Calu3 (cell line): ENCODE measurements at regions of chr1 and their contacts with region 1.

Region 1: DNA sequence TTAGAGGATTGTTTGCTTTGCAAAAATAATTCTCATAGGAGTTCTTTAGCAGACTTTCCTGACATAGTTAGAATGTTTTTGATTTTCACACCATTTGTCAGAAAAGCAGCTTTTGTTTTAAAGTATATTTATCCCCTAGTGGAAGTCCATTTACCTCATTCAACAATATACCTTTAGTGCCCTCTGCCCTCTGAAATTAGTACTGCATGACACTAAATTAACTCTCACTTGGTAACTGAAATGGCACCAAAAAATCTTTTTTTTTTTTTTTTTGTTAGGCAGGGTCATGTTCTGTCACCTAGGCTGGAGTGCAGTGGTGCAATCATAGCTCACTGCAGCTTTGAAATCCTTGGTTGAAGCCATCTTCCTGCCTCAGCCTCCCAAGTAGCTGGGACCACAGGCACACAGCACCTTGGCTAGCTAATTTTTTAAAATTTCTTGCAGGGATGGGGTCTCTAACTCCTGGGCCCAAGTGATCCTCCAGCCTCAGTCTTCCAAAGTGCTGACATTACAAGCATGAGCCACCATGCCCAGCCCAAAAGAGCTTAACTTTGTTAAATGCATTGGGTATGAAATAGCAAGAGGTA is 13.6 kb downstream of the LRRC42 start:
- DNase-seq: peak; percentile 26
- H3K4me3 Mint-ChIP-seq: no peak overlapping the region
- H3K27ac Mint-ChIP-seq: no peak overlapping the region
- H3K4me1 Mint-ChIP-seq: peaks cover 13% of the 10 kb centered on the region
- H3K27me3 Mint-ChIP-seq: no peaks in the 10 kb centered on the region
- CTCF ChIP-seq: peak; percentile 71

Region 2: GRCh38 chr1:53165408-53165961 is 794.3 kb before region 1 on chr1:
- CTCF ChIA-PET with region 1: no interaction called
- intact Hi-C with region 1: no loop called
- DNase-seq: no peak
- H3K4me3 Mint-ChIP-seq: no peak overlapping the region
- H3K27ac Mint-ChIP-seq: no peak overlapping the region
- H3K4me1 Mint-ChIP-seq: no peaks in the 10 kb centered on the region
- H3K27me3 Mint-ChIP-seq: no peaks in the 10 kb centered on the region
- CTCF ChIP-seq: no peak

Region 3: DNA sequence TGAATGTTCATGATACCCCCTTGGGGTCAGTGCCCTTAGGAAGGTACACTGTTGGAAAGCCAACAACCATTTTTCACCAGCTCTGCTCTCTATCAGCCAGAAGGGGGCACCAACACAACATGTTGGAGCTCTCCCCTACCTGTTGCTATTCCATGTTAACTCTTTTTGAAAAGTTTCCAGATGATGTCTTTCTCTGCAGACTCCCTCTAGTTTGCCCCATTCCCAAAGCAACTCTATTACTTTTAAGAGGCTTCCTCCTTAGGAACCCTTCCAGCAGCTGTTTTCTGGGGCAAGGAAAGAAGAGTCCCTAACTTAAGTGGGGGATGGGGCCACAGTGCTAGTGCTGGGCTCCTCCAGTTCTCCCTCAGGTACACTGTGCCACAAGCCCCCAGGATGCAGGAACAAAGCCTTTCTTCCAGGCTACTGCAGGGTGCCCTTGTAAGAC is 98.8 kb before region 1 on chr1:
- CTCF ChIA-PET with region 1: interaction called, 23 read pairs
- intact Hi-C with region 1: loop called (anchors 2 kb)
- DNase-seq: peak; percentile 45
- H3K4me3 Mint-ChIP-seq: no peak overlapping the region
- H3K27ac Mint-ChIP-seq: no peak overlapping the region
- H3K4me1 Mint-ChIP-seq: no peaks in the 10 kb centered on the region
- H3K27me3 Mint-ChIP-seq: no peaks in the 10 kb centered on the region
- CTCF ChIP-seq: peak; percentile 75

Region 4: GRCh38 chr1:53878492-53879105 is 81.2 kb before region 1 on chr1:
- CTCF ChIA-PET with region 1: interaction called, 14 read pairs
- intact Hi-C with region 1: no loop called
- DNase-seq: no peak
- H3K4me3 Mint-ChIP-seq: no peak overlapping the region
- H3K27ac Mint-ChIP-seq: no peak overlapping the region
- H3K4me1 Mint-ChIP-seq: no peaks in the 10 kb centered on the region
- H3K27me3 Mint-ChIP-seq: no peaks in the 10 kb centered on the region
- CTCF ChIP-seq: peak; percentile 46

Region 5: DNA sequence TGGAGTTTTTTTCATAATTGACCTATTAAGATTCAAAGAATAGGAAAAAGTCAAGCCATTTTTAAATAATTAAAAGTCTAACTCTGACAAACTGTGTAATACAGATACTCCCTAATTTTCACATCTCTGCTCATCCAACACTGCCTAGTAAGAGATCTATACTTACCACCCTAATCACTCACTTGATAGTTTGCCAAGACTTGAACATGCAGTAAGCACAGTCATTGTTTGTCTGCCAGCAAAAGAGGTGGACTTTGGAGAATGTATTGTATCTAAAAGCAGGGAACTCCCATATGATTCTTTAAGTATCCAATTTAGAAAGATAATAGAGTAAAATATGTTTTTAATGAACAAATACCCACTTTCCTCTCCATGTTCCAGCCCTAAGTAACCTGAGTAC is 77.7 kb after region 1 on chr1:
- CTCF ChIA-PET with region 1: no interaction called
- intact Hi-C with region 1: no loop called
- DNase-seq: no peak
- H3K4me3 Mint-ChIP-seq: no peak overlapping the region
- H3K27ac Mint-ChIP-seq: no peak overlapping the region
- H3K4me1 Mint-ChIP-seq: no peaks in the 10 kb centered on the region
- H3K27me3 Mint-ChIP-seq: no peaks in the 10 kb centered on the region
- CTCF ChIP-seq: no peak